Natural killer cell (primary cell): ENCODE measurements at regions of chr1 and their contacts with region 1.

Region 1: DNA sequence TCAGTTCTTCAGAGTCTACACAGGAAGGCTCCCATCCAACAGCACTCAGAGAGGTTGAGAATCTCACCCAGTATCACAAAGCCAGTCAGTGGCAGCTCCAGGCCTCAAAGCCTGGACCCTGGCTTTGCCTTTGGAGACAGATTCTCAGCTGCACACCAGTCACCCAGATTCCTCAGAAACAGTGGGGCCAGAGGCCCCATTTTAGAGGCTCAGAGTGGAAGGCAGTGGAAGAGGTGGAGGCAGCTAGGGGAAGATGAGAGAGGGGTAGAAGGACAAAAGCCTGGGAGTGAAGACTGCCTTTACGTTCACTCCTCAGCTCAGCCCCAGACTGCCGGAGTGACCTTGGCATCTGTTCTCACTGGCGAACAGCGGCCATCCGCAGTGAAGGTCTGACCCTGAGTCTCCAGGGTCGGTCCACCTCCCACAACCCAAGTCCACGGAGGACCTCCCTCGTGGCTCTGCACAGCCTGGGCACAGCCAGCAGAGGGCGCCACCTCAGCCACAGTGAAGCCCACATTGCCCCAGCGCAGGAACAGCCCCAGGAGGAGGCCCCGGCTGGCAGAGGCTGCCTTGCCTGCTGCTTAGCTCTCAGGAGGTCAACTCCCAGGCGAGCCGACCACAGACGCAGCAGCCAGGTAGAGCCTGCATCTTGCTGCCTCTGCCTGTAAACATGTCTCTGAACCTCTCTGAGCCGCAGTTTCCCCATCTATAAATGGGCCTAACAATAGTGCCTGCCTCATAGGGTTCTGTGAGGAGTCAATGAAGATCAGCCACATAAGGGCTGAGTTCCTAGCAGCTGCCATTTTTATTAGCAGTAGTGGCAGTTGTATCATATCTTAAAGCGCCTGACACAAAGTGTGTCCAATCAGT is 5.9 kb upstream of the FNDC5 start:
- DNase-seq: peak; percentile 45 to 78
- ATAC-seq: peak; percentile 80 to 88 (median 88)
- H3K4me3 ChIP-seq: no peak overlapping the region
- H3K4me3 Mint-ChIP-seq: no peak overlapping the region
- H3K27ac ChIP-seq: no peak overlapping the region
- H3K27ac Mint-ChIP-seq: no peak overlapping the region
- H3K4me1 ChIP-seq: peaks cover 17% of the 10 kb centered on the region
- H3K4me1 Mint-ChIP-seq: peaks cover 0 to 6% of the 10 kb centered on the region in 2 donors
- H3K27me3 ChIP-seq: peaks cover 14% of the 10 kb centered on the region
- H3K27me3 Mint-ChIP-seq: peaks cover 24 to 27% of the 10 kb centered on the region in 2 donors
- CTCF ChIP-seq: peak; percentile 70

Region 2: DNA sequence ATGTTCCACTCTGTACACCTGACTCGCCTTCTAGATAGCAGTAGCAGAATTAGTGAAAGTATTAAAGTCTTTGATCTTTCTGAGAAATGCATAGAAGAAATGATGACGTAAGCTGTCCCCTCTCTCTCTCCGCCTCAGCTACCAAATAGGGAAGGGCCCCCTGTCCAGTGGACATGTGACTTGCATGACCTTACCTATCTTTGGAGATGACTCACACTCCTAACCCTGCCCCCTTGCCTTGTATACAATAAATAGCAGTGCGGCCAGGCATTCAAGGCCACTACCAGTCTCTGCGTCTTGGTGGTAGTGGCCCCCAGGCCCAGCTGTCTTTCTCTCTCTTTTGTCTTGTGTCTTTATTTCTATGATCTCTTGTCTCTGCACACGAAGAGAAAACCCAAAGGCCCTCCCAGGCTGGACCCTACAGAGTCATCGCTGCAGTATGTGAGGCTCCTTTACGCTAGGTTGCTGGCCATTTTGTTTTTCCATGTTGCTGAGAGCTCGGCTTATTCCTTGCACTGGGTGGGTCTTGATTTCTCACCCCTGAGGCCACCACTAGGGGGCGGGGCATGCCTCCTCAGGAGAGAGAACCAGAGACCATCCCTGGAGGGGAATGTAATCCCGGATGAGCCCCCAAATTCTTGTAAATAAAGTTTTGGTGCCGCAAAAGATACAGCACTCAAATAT is 427.7 kb before region 1 on chr1:
- intact Hi-C with region 1: loop called (anchors 10 kb)
- DNase-seq: no peak
- ATAC-seq: no peak
- H3K4me3 ChIP-seq: no peak overlapping the region
- H3K4me3 Mint-ChIP-seq: no peak overlapping the region
- H3K27ac ChIP-seq: no peak overlapping the region
- H3K27ac Mint-ChIP-seq: no peak overlapping the region
- H3K4me1 ChIP-seq: no peaks in the 10 kb centered on the region
- H3K4me1 Mint-ChIP-seq: no peaks in the 10 kb centered on the region
- H3K27me3 ChIP-seq: no peaks in the 10 kb centered on the region
- H3K27me3 Mint-ChIP-seq: peaks cover 4 to 23% of the 10 kb centered on the region in 2 donors
- CTCF ChIP-seq: no peak

Region 3: DNA sequence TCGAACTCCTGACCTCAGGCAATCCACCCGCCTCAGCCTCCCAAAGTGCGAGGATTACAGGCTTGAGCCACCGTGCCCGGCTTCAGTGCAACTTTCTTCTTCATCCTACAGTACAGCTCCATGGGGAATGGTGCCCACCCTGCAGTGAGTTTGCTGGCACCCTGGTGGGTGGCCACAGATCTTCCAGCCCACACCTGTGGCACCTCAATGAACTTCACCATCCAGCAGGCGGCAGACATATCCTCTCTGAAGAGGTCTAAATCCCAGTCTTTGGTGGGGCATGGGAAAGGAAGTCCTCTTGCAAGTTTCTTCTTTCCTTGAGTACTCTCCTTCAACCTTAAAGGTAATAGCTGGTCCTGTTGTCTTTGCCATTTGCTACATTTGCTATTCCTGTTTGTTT is 355.4 kb before region 1 on chr1:
- intact Hi-C with region 1: loop called (anchors 1 kb)
- DNase-seq: no peak
- ATAC-seq: no peak
- H3K4me3 ChIP-seq: no peak overlapping the region
- H3K4me3 Mint-ChIP-seq: peak overlapping the region; percentile 57
- H3K27ac ChIP-seq: no peak overlapping the region
- H3K27ac Mint-ChIP-seq: peak overlapping the region in 1 of 2 donors; percentile 5
- H3K4me1 ChIP-seq: peaks cover 7% of the 10 kb centered on the region
- H3K4me1 Mint-ChIP-seq: no peaks in the 10 kb centered on the region
- H3K27me3 ChIP-seq: no peaks in the 10 kb centered on the region
- H3K27me3 Mint-ChIP-seq: peaks cover 0 to 10% of the 10 kb centered on the region in 2 donors
- CTCF ChIP-seq: no peak

Region 4: GRCh38 chr1:32716312-32717148 is 160.0 kb before region 1 on chr1:
- intact Hi-C with region 1: loop called (anchors 1 kb)
- DNase-seq: peak in 1 of 2 donors; percentile 61
- ATAC-seq: peak in 1 of 3 donors; percentile 27
- H3K4me3 ChIP-seq: no peak overlapping the region
- H3K4me3 Mint-ChIP-seq: no peak overlapping the region
- H3K27ac ChIP-seq: no peak overlapping the region
- H3K27ac Mint-ChIP-seq: no peak overlapping the region
- H3K4me1 ChIP-seq: peaks cover 11% of the 10 kb centered on the region
- H3K4me1 Mint-ChIP-seq: peaks cover 4 to 16% of the 10 kb centered on the region in 2 donors
- H3K27me3 ChIP-seq: no peaks in the 10 kb centered on the region
- H3K27me3 Mint-ChIP-seq: peaks cover 0 to 11% of the 10 kb centered on the region in 2 donors
- CTCF ChIP-seq: no peak

Region 5: DNA sequence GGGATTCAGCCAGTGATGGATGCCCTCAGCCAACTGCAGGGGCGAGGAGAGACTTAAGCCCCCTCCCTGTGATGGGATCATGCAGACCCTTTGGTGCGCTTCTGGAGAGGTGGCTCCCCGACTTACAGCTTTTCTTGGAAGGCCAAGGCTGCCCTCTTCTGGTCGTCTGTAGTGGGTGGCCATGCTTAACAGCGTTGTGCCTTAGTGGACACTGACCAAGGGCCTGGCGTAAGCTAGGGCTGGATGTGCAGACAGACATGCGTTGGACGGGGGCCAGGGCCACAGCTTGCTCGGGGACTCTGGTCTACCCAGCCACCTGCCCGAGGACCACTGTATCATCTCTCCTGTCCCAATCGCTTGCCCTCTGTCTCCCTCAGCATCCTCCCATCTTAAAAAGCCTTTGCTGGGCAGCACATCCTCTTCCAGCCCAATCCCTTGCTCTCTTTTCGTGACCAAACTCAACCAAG is 209.8 kb after region 1 on chr1:
- intact Hi-C with region 1: loop called (anchors 1 kb)
- DNase-seq: peak in 1 of 2 donors; percentile 64
- ATAC-seq: peak; percentile 58 to 72 (median 67)
- H3K4me3 ChIP-seq: no peak overlapping the region
- H3K4me3 Mint-ChIP-seq: no peak overlapping the region
- H3K27ac ChIP-seq: no peak overlapping the region
- H3K27ac Mint-ChIP-seq: no peak overlapping the region
- H3K4me1 ChIP-seq: peaks cover 27% of the 10 kb centered on the region
- H3K4me1 Mint-ChIP-seq: peaks cover 28 to 33% of the 10 kb centered on the region in 2 donors
- H3K27me3 ChIP-seq: no peaks in the 10 kb centered on the region
- H3K27me3 Mint-ChIP-seq: peaks cover 0 to 7% of the 10 kb centered on the region in 2 donors
- CTCF ChIP-seq: peak; percentile 44